Ovary (tissue), 10 donors: ENCODE measurements at regions of chr5 and their contacts with region 1.

Region 1: DNA sequence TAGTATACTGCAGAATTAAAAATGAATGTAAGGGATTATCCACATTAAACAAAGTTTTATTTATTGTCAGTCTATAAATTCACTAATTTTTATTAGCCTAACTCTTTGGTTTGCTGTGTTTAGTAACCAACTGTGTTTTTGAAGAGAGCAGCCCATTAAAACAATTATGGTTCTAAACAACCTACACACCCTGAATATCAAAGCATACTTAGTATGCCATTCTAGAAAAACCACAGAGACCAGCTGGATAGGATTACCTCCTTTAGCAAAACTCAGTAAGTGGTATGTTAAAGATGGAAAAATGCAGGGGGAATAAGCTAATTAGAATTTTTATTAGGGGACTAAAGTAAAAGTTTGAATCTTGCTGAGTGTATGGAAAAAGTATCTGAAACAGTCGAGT is 1981.7 kb upstream of the NUDT12 start:
- DNase-seq: no peak
- H3K4me3 ChIP-seq: no peak overlapping the region
- H3K27ac ChIP-seq: no peak overlapping the region
- H3K4me1 ChIP-seq: no peaks in the 10 kb centered on the region
- H3K27me3 ChIP-seq: no peaks in the 10 kb centered on the region
- CTCF ChIP-seq: no peak
- EP300 ChIP-seq: no peak
- POLR2A ChIP-seq: no peak

Region 2: DNA sequence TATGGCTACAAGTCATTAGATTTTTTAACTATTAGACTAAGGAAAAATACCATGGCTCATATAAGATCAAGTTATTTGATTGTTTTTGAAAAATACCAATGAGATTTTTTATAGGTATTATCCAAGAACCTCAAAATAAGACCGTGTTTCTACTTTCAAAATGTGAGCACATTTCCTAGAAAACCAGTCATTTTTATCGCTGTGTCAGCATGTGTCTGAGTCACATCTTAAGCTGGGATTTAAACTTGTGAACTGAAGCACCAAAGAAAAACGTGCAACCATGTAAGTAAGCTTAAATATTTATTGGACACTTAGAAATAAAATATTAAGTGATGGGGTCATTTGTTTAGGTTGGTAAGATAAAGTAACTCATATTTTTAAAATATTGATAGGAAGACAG is 305.7 kb before region 1 on chr5:
- intact Hi-C with region 1: loop called in 1 of 4 experiments (anchors 10 kb)
- DNase-seq: no peak
- H3K4me3 ChIP-seq: no peak overlapping the region
- H3K27ac ChIP-seq: no peak overlapping the region
- H3K4me1 ChIP-seq: no peaks in the 10 kb centered on the region
- H3K27me3 ChIP-seq: no peaks in the 10 kb centered on the region
- CTCF ChIP-seq: no peak
- EP300 ChIP-seq: no peak
- POLR2A ChIP-seq: no peak

Region 3: DNA sequence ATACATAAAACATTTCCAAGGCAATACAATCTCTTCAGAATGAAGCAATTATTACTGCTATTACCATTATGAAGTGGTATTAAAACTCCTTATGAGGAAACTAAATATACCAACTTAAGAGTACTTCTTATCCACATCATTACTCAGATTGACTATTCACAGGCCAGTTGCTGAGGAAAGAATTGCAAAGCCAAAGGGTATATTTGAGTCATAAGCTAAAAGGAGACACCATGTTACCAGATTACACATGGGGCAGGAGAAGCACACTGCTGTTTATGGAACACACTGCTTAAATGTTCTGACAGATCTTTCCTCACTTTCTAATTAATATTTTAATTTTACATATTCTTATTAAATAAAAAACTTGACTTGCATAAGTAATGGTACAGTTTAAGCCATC is 255.4 kb before region 1 on chr5:
- intact Hi-C with region 1: no loop called
- DNase-seq: no peak
- H3K4me3 ChIP-seq: no peak overlapping the region
- H3K27ac ChIP-seq: no peak overlapping the region
- H3K4me1 ChIP-seq: no peaks in the 10 kb centered on the region
- H3K27me3 ChIP-seq: no peaks in the 10 kb centered on the region
- CTCF ChIP-seq: no peak
- EP300 ChIP-seq: no peak
- POLR2A ChIP-seq: no peak

Region 4: GRCh38 chr5:105506692-105507277 is 37.5 kb before region 1 on chr5:
- intact Hi-C with region 1: no loop called
- DNase-seq: no peak
- H3K4me3 ChIP-seq: no peak overlapping the region
- H3K27ac ChIP-seq: no peak overlapping the region
- H3K4me1 ChIP-seq: no peaks in the 10 kb centered on the region
- H3K27me3 ChIP-seq: no peaks in the 10 kb centered on the region
- CTCF ChIP-seq: no peak
- EP300 ChIP-seq: no peak
- POLR2A ChIP-seq: no peak

Region 5: GRCh38 chr5:105587963-105588657 is 43.8 kb after region 1 on chr5:
- intact Hi-C with region 1: no loop called
- DNase-seq: no peak
- H3K4me3 ChIP-seq: no peak overlapping the region
- H3K27ac ChIP-seq: no peak overlapping the region
- H3K4me1 ChIP-seq: no peaks in the 10 kb centered on the region
- H3K27me3 ChIP-seq: no peaks in the 10 kb centered on the region
- CTCF ChIP-seq: no peak
- EP300 ChIP-seq: no peak
- POLR2A ChIP-seq: no peak

Region 6: GRCh38 chr5:105828821-105829220 is 284.5 kb after region 1 on chr5:
- intact Hi-C with region 1: no loop called
- DNase-seq: no peak
- H3K4me3 ChIP-seq: no peak overlapping the region
- H3K27ac ChIP-seq: no peak overlapping the region
- H3K4me1 ChIP-seq: no peaks in the 10 kb centered on the region
- H3K27me3 ChIP-seq: no peaks in the 10 kb centered on the region
- CTCF ChIP-seq: no peak
- EP300 ChIP-seq: no peak
- POLR2A ChIP-seq: no peak